ENCODE measurements at regions of chr10 and their contacts with region 1.

Region 1: DNA sequence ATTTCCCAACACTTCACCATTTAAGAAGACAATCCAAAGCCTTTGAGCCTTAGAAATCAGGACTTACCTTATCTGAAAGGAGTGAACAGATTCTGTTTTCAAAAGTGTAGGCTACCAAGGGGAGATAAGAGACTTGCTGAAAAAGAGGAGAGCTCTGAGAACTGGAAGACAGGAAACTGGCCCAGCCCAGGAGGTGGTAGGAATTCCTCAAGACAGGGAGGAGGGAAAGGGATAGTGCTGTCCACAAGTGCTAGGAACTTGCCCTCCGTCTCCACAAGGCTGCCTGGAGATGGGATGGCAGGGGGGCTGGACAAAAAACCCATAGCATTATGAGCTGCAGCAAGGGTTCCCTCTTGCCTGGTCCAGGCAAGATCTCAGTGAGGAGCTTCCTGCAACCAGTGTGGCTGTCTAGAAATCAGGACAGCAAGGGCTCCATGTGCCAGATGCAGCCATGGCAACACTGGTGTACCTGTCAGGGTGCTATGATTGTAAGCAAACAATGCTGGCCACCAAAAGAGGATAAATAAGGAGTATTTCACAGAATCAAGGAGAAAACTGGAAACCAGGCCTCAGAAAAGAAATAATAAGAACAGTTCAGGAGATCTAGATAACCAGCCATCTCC is 22.7 kb upstream of the FRMD4A start:
- DNase-seq: no peak
- H3K4me3 ChIP-seq: no peak overlapping the region
- H3K27ac ChIP-seq: no peak overlapping the region
- H3K4me1 ChIP-seq: no peaks in the 10 kb centered on the region
- H3K27me3 ChIP-seq: no peaks in the 10 kb centered on the region
- CTCF ChIP-seq: no peak
- EP300 ChIP-seq: no peak
- POLR2A ChIP-seq: no peak

Region 2: GRCh38 chr10:14009371-14010100 is 343.9 kb before region 1 on chr10:
- in situ Hi-C with region 1: no loop called
- intact Hi-C with region 1: no loop called
- DNase-seq: no peak
- H3K4me3 ChIP-seq: peak overlapping the region in 2 of 4 donors; percentile 10 to 31
- H3K27ac ChIP-seq: peak overlapping the region; percentile 15 to 59 (median 52)
- H3K4me1 ChIP-seq: peaks cover 0 to 11% (median 3%) of the 10 kb centered on the region in 4 donors
- H3K27me3 ChIP-seq: no peaks in the 10 kb centered on the region
- CTCF ChIP-seq: no peak
- EP300 ChIP-seq: no peak
- POLR2A ChIP-seq: peak; percentile 11

Region 3: GRCh38 chr10:14156104-14156503 is 197.3 kb before region 1 on chr10:
- in situ Hi-C with region 1: no loop called
- intact Hi-C with region 1: loop called (anchors 5 kb)
- DNase-seq: no peak
- H3K4me3 ChIP-seq: no peak overlapping the region
- H3K27ac ChIP-seq: no peak overlapping the region
- H3K4me1 ChIP-seq: no peaks in the 10 kb centered on the region
- H3K27me3 ChIP-seq: peaks cover 17% of the 10 kb centered on the region
- CTCF ChIP-seq: no peak
- EP300 ChIP-seq: no peak
- POLR2A ChIP-seq: no peak

Region 4: DNA sequence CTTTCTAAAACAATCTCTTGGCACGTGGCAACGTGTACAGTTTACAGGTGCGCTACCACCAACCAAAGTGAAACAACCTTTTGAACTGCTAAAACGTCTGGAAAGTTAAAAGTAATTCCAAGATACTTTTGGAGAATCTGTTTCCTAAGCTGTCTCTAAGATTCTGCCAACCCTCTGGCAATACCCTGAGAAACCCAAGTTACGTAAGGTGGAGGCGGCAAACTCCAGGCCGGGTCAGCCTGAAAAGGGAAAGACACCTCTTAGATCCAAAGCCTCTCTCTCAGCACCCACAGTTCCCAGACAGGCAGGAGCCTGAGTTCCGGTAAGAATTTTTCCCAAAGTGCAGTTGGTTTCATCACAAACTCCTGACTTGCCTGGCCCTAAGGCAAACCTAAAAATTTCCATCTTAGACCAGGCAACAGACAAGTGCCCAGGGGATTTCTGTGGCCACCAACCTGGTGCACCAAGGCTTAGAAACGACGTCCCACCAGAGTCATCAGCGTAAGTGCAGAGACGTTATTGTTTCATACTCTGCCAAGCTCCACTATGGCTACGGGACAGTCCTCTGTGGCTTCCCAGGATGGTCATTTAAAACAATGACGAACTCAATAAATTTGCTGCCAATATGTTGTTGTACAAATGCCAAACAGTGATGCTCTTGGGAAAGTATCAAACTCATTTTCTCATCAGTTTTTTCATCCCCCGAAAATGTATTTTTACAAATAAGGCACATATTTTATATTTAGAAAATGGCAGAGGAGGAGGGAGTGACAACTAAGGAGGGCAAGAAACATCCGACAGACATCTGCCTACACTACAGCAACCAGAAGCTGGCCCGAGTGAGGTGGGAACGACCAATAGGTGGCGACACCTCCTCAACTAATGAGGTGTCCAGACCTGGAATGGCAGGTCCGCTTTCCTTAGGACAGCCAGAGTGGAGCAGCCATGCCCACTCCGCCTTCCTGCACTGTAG is 183.1 kb after region 1 on chr10:
- in situ Hi-C with region 1: no loop called
- intact Hi-C with region 1: no loop called
- DNase-seq: peak; percentile 82
- H3K4me3 ChIP-seq: no peak overlapping the region
- H3K27ac ChIP-seq: peak overlapping the region in 2 of 4 donors; percentile 5 to 6
- H3K4me1 ChIP-seq: peaks cover 0 to 30% (median 18%) of the 10 kb centered on the region in 4 donors
- H3K27me3 ChIP-seq: no peaks in the 10 kb centered on the region
- CTCF ChIP-seq: peak; percentile 57 to 65 (median 59)
- EP300 ChIP-seq: no peak
- POLR2A ChIP-seq: no peak

Region 5: GRCh38 chr10:14617852-14618251 is 264.4 kb after region 1 on chr10:
- in situ Hi-C with region 1: no loop called
- intact Hi-C with region 1: no loop called
- DNase-seq: no peak
- H3K4me3 ChIP-seq: no peak overlapping the region
- H3K27ac ChIP-seq: no peak overlapping the region
- H3K4me1 ChIP-seq: peaks cover 0 to 16% (median 2%) of the 10 kb centered on the region in 4 donors
- H3K27me3 ChIP-seq: no peaks in the 10 kb centered on the region
- CTCF ChIP-seq: no peak
- EP300 ChIP-seq: no peak
- POLR2A ChIP-seq: no peak

Region 6: DNA sequence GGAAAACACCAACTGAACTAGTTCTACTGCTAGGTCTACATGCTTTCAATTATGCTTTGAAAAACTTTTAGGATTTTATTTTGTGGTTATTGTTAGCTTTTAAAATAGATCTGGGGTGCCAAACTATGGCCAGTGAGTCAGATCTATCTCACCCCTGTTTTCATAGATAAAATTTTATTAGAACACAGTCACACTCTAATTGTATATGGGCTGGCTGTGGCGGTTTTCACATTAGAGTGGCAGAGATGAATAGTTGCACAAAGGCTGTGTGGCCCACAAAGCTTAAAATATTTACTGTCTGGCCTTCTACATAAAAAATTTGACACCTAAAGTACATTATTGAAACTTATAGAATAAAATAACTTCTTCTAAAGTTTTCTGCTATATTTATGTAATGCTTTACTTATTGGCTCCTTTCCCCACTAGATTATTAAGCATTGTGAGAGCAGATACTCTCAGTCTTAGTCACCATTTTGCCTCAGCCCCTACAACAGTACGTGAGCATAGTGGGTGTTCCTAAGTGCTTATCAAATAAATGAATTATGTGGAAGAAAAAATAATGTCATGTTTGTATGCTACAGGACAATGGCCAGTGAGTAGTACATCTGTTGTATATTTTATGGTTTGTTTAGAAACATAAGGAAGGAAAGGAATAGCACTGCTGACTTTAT is 519.8 kb after region 1 on chr10:
- in situ Hi-C with region 1: no loop called
- intact Hi-C with region 1: no loop called
- DNase-seq: no peak
- H3K4me3 ChIP-seq: no peak overlapping the region
- H3K27ac ChIP-seq: no peak overlapping the region
- H3K4me1 ChIP-seq: peaks cover 0 to 11% (median 6%) of the 10 kb centered on the region in 4 donors
- H3K27me3 ChIP-seq: no peaks in the 10 kb centered on the region
- CTCF ChIP-seq: no peak
- EP300 ChIP-seq: no peak
- POLR2A ChIP-seq: no peak

Measured in transverse colon (tissue), 4 donors.